ENCODE measurements at regions of chr6 and their contacts with region 1.

Region 1: GRCh38 chr6:83067448-83068413 is at the start of gene DOP1A:
- DNase-seq: peak; percentile 95
- H3K4me3 Mint-ChIP-seq: peak within 1 kb of the TSS; percentile 88
- H3K27ac Mint-ChIP-seq: peak within 1 kb of the TSS; percentile 71
- H3K4me1 Mint-ChIP-seq: peaks cover 43% of the 10 kb centered on the region
- H3K27me3 Mint-ChIP-seq: no peaks in the 10 kb centered on the region
- total RNA-seq, gene DOP1A: 12.5 to 13.3 TPM

Region 2: DNA sequence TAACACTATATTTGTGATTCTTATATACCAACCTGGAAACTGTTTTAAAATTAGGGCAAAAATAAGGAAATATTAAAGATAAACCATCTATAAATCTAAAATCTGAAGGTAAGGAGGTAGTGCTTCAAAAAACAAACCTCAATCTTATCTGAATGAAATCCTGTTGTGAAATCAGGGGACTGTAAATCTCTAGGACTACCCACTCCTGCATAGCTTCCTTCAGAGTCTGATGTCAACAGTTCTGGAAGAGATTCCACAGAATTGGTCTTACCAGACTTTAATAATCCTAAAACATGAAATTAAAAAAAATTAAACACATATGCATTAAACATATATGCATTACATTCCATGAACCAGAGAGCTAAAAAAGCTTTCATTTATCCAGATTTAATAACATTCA is 871.6 kb before region 1 on chr6:
- CTCF ChIA-PET with region 1: interaction called, 12 read pairs
- POLR2A ChIA-PET with region 1: no interaction called
- DNase-seq: no peak
- H3K4me3 Mint-ChIP-seq: no peak overlapping the region
- H3K27ac Mint-ChIP-seq: no peak overlapping the region
- H3K4me1 Mint-ChIP-seq: no peaks in the 10 kb centered on the region
- H3K27me3 Mint-ChIP-seq: no peaks in the 10 kb centered on the region

Region 3: GRCh38 chr6:83047065-83047754 is 20.5 kb before region 1 on chr6:
- CTCF ChIA-PET with region 1: interaction called, 80 read pairs
- POLR2A ChIA-PET with region 1: no interaction called
- DNase-seq: no peak
- H3K4me3 Mint-ChIP-seq: no peak overlapping the region
- H3K27ac Mint-ChIP-seq: no peak overlapping the region
- H3K4me1 Mint-ChIP-seq: no peaks in the 10 kb centered on the region
- H3K27me3 Mint-ChIP-seq: no peaks in the 10 kb centered on the region

Region 4: GRCh38 chr6:83132121-83132520 is 64.4 kb after region 1 on chr6:
- CTCF ChIA-PET with region 1: interaction called, 11 read pairs
- POLR2A ChIA-PET with region 1: no interaction called
- DNase-seq: no peak
- H3K4me3 Mint-ChIP-seq: no peak overlapping the region
- H3K27ac Mint-ChIP-seq: no peak overlapping the region
- H3K4me1 Mint-ChIP-seq: no peaks in the 10 kb centered on the region
- H3K27me3 Mint-ChIP-seq: no peaks in the 10 kb centered on the region

Region 5: DNA sequence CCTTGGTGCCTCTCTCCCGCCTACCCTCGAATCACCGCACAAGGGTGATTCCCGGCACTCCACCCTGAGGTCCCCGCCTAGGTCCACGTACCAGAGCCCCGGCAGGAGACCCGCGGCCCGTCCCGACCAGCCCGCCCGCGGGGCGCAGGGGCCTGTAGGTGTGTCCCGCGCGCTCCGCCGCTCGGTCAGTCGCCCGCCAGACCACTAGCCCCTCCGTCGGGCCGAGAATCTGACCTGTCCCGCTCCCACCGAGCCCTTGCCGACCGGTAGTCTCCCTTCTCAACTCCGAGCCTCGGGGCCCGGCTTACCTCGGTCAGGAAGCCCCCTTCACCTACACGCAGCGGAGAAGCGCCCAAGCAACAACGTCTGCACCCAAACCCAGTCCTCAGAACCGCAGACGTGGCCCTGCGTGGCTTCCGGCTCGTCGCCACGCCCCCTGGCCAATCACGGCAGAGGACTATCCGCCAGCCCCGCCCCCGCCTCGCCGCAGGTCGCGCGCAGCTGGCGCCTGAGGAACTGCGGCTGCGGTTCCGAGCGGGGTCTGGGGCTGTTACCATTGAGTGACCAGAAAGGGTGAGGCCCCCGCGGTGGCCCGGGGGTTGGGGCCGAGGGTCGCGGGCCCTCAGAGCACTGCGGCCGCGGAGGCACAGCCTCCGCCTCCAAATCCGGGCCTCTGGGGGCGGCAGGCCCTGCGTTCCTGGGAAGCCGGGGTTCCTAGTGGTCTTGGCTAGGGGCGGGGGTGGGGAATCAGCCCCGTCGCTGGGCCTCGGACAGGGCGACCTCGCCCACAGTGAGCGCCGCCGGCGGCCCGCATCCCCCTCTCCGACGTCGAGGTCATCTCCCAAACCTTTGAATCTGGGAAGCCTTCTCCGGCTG is 125.4 kb after region 1 on chr6 and contains the starts of genes PGM3 and RWDD2A:
- CTCF ChIA-PET with region 1: interaction called, 53 read pairs
- POLR2A ChIA-PET with region 1: interaction called, 8 read pairs
- DNase-seq: peak; percentile 92
- H3K4me3 Mint-ChIP-seq: peak within 1 kb of the TSS; percentile 95
- H3K27ac Mint-ChIP-seq: peak within 1 kb of the TSS; percentile 79
- H3K4me1 Mint-ChIP-seq: peaks cover 46% of the 10 kb centered on the region
- H3K27me3 Mint-ChIP-seq: no peaks in the 10 kb centered on the region
- total RNA-seq, gene PGM3: 18.6 to 20.7 TPM
- total RNA-seq, gene RWDD2A: 1.9 to 2.3 TPM

Region 6: DNA sequence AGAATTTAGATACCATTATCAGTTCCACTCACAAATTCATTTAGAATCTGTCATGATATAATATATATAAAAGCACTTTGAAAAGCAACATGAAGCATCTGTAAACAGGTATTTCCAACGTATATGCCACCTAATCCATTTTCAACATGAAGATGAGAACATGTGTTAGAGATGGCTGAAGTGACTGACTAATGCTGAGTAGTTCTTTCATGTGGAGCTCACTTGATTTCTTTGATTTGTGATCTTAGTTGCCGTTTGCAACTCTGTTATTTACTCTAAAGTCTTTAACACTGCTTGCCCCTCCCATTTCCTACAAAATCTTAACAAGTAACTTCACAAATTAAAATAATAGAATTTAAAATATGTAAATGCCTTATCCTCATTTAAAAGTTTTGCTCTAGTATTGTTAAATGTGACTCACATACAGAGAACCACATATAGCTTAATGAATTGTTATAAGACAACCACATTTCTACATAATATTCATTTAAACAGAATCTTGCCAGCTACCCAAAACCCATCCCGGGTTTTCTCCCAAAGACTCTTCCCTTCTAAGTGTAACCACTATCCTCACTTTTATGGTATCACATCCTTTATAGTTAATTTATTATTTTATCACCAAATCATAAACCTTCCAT is 284.8 kb after region 1 on chr6:
- CTCF ChIA-PET with region 1: no interaction called
- POLR2A ChIA-PET with region 1: no interaction called
- DNase-seq: no peak
- H3K4me3 Mint-ChIP-seq: no peak overlapping the region
- H3K27ac Mint-ChIP-seq: no peak overlapping the region
- H3K4me1 Mint-ChIP-seq: no peaks in the 10 kb centered on the region
- H3K27me3 Mint-ChIP-seq: no peaks in the 10 kb centered on the region

Region 7: GRCh38 chr6:83514866-83515466 is 447.2 kb after region 1 on chr6:
- CTCF ChIA-PET with region 1: interaction called, 45 read pairs
- POLR2A ChIA-PET with region 1: interaction called, 3 read pairs
- DNase-seq: peak; percentile 20
- H3K4me3 Mint-ChIP-seq: no peak overlapping the region
- H3K27ac Mint-ChIP-seq: no peak overlapping the region
- H3K4me1 Mint-ChIP-seq: peaks cover 6% of the 10 kb centered on the region
- H3K27me3 Mint-ChIP-seq: peaks cover 36% of the 10 kb centered on the region

Measured in activated CD4-positive, alpha-beta memory T cell treated with anti-CD3 and anti-CD28 coated beads, Interleukin-2, amount 10 ng/mL, durations not matched to agents 7 days and 5 days (primary cell).